Calu3 (cell line): ENCODE measurements at regions of chr9 and their contacts with region 1.

Region 1: GRCh38 chr9:6584881-6585597 is 60.5 kb downstream of the GLDC start:
- DNase-seq: no peak
- H3K4me3 Mint-ChIP-seq: no peak overlapping the region
- H3K27ac Mint-ChIP-seq: no peak overlapping the region
- H3K4me1 Mint-ChIP-seq: peaks cover under 1% of the 10 kb centered on the region
- H3K27me3 Mint-ChIP-seq: no peaks in the 10 kb centered on the region
- CTCF ChIP-seq: peak; percentile 27

Region 2: GRCh38 chr9:6655036-6655435 is 70.0 kb after region 1 on chr9:
- CTCF ChIA-PET with region 1: no interaction called
- intact Hi-C with region 1: no loop called
- DNase-seq: no peak
- H3K4me3 Mint-ChIP-seq: no peak overlapping the region
- H3K27ac Mint-ChIP-seq: no peak overlapping the region
- H3K4me1 Mint-ChIP-seq: no peaks in the 10 kb centered on the region
- H3K27me3 Mint-ChIP-seq: no peaks in the 10 kb centered on the region
- CTCF ChIP-seq: no peak

Region 3: DNA sequence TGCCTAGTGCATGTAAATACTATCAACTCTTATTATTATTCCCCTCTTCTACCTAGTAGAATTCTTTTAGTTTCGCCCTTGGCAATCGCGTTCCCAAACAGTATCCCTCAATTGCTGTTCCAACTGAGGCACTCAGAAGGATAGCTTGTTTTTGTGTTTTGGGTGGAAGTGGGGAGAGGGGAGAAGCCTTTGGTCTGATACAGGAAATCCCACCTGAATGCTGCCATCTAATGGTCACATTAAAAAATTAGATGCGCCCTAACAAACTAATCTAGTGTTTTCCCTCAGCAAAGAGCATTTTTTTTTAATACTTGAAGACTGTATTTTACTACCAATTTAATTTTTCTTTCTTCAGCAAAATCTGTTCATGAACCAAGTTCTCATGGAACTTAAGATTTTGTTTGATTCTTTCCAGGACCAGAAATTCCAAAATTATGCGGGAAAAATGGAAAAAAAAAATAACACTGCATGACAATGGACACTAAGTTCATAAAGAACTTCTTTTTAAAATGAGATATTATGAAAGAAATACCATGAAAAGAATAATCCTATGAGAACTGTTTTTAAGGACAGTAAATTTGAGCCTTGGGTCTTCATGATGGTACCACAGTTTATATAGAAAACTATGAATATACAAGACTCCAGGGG is 82.7 kb after region 1 on chr9:
- CTCF ChIA-PET with region 1: no interaction called
- intact Hi-C with region 1: loop called (anchors 1 kb)
- DNase-seq: no peak
- H3K4me3 Mint-ChIP-seq: no peak overlapping the region
- H3K27ac Mint-ChIP-seq: no peak overlapping the region
- H3K4me1 Mint-ChIP-seq: peaks cover 21% of the 10 kb centered on the region
- H3K27me3 Mint-ChIP-seq: no peaks in the 10 kb centered on the region
- CTCF ChIP-seq: peak; percentile 68

Region 4: DNA sequence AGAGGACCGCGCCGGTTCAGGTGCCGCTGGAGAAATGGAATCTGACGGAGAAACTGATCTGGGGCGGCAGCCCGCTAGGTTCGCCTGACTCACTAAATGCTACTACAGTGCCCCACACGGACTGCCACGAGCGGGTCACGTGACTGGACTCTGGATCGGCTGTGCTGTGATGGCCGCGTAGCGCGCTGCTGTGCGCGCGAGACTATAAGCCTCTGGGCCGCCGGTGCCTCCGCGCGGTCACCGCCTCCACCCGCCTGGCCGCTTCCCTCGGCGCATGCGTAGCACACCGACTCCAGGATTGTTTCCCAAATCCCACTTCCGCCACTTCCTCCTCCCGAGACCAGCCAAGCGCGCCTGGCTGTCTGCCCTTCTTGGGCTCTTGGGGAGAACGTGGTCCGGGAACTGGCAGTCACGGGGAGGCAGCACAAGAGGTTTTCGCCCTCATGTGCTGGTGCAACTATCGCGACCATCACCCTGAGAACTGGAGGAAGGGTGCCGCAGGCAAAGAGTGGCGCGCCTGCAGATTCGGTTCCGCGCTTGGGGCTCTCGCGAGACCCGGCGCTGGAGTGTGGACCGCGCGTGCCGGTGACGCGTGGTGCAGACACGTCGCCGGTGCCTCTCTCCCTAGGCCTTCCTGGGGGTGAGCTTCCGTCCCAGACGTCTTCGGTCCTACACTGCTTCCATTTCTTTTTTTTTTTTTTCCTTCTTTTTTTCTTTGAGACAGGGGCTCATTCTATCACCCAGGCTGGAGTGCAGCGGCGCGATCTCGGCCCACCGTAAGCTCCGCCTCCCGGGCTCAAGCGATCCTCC is 96.3 kb after region 1 on chr9:
- CTCF ChIA-PET with region 1: no interaction called
- intact Hi-C with region 1: loop called (anchors 5 kb)
- DNase-seq: peak; percentile 92
- H3K4me3 Mint-ChIP-seq: peak overlapping the region; percentile 70
- H3K27ac Mint-ChIP-seq: peak overlapping the region; percentile 95
- H3K4me1 Mint-ChIP-seq: peaks cover 9% of the 10 kb centered on the region
- H3K27me3 Mint-ChIP-seq: no peaks in the 10 kb centered on the region
- CTCF ChIP-seq: no peak

Region 5: GRCh38 chr9:6739218-6739617 is 154.2 kb after region 1 on chr9:
- CTCF ChIA-PET with region 1: no interaction called
- intact Hi-C with region 1: loop called (anchors 1 kb)
- DNase-seq: no peak
- H3K4me3 Mint-ChIP-seq: no peak overlapping the region
- H3K27ac Mint-ChIP-seq: no peak overlapping the region
- H3K4me1 Mint-ChIP-seq: no peaks in the 10 kb centered on the region
- H3K27me3 Mint-ChIP-seq: no peaks in the 10 kb centered on the region
- CTCF ChIP-seq: no peak